ENCODE measurements at regions of chr12 and their contacts with region 1.

Region 1: DNA sequence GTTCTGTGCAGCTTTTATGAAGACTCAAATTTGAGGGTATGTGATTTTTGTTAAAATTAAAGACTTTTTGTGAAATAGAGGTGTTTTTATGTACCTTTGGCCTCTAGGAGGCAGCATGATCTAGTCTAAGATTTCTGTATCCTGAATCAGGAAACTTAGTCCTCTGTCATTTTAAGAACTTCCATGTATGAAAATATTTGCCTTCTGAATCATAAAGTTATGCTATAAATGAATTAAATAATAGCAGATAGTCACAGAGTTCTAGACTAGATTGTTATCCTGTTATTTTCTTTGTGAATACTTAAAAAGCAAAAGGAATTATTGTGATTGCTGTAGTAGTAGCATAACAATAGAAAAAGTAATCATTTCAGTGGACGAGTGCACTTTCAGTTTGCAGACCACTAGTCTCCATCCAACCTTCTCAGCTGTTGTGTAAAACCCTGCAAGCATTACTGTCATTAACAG is 56.3 kb downstream of the FGD4 start:
- DNase-seq: peak; percentile 80
- H3K4me3 ChIP-seq: peak overlapping the region; percentile 34
- H3K27ac ChIP-seq: no peak overlapping the region
- H3K4me1 ChIP-seq: peaks cover 31% of the 10 kb centered on the region
- H3K27me3 ChIP-seq: no peaks in the 10 kb centered on the region
- CTCF ChIP-seq: peak; percentile 76

Region 2: DNA sequence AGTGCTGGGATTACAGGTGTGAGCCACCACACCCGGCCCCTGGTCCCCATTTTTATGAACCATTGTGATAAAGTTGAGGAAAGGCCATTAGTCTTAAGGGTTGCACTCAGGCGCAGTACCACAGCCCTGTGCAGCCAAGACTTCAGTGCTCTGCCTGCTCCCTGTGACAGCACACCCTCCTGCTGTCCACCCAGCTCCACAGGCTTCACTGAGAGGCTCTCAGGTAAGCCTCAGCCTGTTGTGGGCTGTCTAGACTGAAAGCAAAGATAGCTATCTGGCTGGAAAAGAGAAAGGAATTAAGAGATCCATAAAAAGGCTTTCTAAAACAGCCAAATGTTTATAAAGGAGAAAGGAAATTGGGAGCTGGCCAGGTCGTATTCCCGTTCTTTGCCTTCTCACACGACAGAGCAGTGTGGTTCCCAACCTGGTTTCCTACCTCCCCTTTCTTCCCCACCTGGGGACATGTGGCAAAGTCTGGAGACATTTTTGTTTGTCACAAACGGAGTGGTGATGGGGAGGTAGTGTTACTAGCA is 204.3 kb after region 1 on chr12:
- CTCF ChIA-PET with region 1: interaction called, 12 read pairs
- POLR2A ChIA-PET with region 1: no interaction called
- intact Hi-C with region 1: loop called (anchors 1 kb)
- DNase-seq: no peak
- H3K4me3 ChIP-seq: no peak overlapping the region
- H3K27ac ChIP-seq: no peak overlapping the region
- H3K4me1 ChIP-seq: no peaks in the 10 kb centered on the region
- H3K27me3 ChIP-seq: no peaks in the 10 kb centered on the region
- CTCF ChIP-seq: no peak

Region 3: GRCh38 chr12:32671930-32672780 is 216.5 kb after region 1 on chr12:
- CTCF ChIA-PET with region 1: no interaction called
- POLR2A ChIA-PET with region 1: no interaction called
- intact Hi-C with region 1: loop called (anchors 5 kb)
- DNase-seq: peak; percentile 93
- H3K4me3 ChIP-seq: no peak overlapping the region
- H3K27ac ChIP-seq: peak overlapping the region; percentile 51
- H3K4me1 ChIP-seq: peaks cover 7% of the 10 kb centered on the region
- H3K27me3 ChIP-seq: no peaks in the 10 kb centered on the region
- CTCF ChIP-seq: peak; percentile 77

Region 4: DNA sequence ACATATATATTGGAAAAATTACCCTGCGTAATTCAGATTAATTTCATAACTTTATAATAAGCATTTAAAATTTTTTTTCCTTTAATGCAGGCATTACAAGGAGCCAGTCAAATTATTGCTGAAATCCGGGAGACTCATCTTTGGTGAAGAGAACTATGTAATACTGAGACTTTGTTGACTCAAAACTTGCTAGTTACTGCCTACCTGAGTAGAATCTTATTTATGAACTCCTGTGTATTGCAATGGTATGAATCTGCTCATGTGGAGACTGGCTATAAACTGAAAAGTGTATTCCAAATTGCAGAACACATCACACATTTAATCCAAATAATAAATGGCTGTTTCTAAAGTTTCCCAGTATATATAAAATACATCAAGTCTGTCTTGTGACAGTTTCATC is 287.6 kb after region 1 on chr12:
- CTCF ChIA-PET with region 1: interaction called, 3 read pairs
- POLR2A ChIA-PET with region 1: no interaction called
- intact Hi-C with region 1: loop called (anchors 2 kb)
- DNase-seq: no peak
- H3K4me3 ChIP-seq: no peak overlapping the region
- H3K27ac ChIP-seq: no peak overlapping the region
- H3K4me1 ChIP-seq: no peaks in the 10 kb centered on the region
- H3K27me3 ChIP-seq: no peaks in the 10 kb centered on the region
- CTCF ChIP-seq: no peak

Measured in A673 (cell line).